Activated CD8-positive, alpha-beta T cell treated with anti-CD3 and anti-CD28 coated beads, Interleukin-2, amount 10 ng/mL, durations not matched to agents 7 days and 5 days (primary cell): ENCODE measurements at regions of chr12 and their contacts with region 1.

Region 1: DNA sequence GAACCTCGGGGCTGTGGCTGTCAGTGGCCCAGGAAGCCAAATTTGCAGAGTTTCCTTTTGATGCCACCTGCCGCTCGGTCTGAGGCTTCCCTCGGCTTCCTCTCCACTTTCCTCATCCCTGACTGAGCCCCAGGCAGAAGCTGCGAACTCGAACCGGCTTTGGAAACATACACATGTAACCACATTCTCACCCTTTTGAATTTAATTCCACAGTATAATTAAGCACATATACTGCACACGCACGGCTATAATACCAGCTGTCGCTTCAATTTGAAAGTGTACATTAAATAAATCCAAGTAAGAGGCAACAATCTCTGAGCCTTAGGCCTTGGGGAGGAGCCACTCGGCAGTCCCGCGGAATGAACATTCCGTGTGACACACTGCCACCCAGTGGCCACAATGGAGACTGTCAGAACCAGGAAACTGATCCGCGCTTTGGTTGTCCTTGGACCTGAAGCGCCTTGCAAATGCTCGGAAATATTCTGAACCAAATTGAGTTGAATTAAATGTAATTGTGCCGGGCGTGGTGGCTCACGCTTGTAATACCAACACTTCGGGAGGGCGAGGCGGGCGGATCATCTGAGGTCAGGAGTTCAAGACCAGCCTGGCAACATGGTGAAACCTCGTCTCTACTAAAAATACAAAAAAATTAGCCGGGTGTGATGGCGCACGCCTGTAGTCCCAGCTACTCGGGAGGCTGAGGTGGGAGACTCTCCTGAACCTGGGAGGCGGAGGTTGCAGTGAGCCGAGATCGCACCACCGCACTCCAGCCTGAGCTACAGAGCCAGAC is 117.9 kb upstream of the TMPO start:
- DNase-seq: peak; percentile 89
- ATAC-seq: peak; percentile 87
- H3K4me3 Mint-ChIP-seq: peak overlapping the region; percentile 75
- H3K27ac Mint-ChIP-seq: peak overlapping the region; percentile 84
- H3K4me1 Mint-ChIP-seq: peaks cover 39% of the 10 kb centered on the region
- H3K27me3 Mint-ChIP-seq: no peaks in the 10 kb centered on the region

Region 2: DNA sequence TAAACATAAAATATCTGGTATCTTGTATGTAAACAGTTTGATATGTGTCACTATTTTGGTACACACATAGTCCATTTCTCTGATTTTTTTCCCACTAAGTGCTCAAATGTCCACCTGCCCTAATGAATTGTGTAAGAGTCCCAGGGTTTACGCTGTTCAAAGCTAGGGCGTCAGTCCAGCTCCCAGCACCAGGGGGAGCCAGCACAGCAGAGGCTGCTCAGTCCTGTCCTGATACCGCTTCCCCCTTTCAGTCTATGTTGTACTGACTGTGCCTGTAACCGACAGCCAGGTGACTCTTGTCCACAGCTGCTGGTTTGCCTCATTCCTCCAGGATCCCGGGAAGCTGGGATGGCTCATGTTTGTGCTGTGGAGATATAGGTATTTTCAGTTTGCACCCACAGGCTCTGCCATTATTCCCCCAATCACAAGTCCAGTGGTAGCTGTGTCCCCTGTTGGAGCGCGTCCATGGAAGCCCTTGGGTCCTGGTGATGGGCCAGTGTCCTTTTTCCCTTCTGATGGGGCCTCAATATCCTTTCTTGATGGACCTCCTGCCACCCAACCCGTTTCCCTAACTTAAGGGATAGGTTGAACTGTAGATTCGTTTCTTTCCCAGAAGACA is 1248.5 kb before region 1 on chr12:
- CTCF ChIA-PET with region 1: interaction called, 10 read pairs
- POLR2A ChIA-PET with region 1: no interaction called
- DNase-seq: peak; percentile 63
- ATAC-seq: peak; percentile 96
- H3K4me3 Mint-ChIP-seq: no peak overlapping the region
- H3K27ac Mint-ChIP-seq: no peak overlapping the region
- H3K4me1 Mint-ChIP-seq: peaks cover 4% of the 10 kb centered on the region
- H3K27me3 Mint-ChIP-seq: peaks cover 3% of the 10 kb centered on the region

Region 3: GRCh38 chr12:98235301-98235700 is 162.2 kb before region 1 on chr12:
- CTCF ChIA-PET with region 1: no interaction called
- POLR2A ChIA-PET with region 1: no interaction called
- DNase-seq: no peak
- ATAC-seq: no peak
- H3K4me3 Mint-ChIP-seq: no peak overlapping the region
- H3K27ac Mint-ChIP-seq: no peak overlapping the region
- H3K4me1 Mint-ChIP-seq: no peaks in the 10 kb centered on the region
- H3K27me3 Mint-ChIP-seq: peaks cover 3% of the 10 kb centered on the region

Region 4: DNA sequence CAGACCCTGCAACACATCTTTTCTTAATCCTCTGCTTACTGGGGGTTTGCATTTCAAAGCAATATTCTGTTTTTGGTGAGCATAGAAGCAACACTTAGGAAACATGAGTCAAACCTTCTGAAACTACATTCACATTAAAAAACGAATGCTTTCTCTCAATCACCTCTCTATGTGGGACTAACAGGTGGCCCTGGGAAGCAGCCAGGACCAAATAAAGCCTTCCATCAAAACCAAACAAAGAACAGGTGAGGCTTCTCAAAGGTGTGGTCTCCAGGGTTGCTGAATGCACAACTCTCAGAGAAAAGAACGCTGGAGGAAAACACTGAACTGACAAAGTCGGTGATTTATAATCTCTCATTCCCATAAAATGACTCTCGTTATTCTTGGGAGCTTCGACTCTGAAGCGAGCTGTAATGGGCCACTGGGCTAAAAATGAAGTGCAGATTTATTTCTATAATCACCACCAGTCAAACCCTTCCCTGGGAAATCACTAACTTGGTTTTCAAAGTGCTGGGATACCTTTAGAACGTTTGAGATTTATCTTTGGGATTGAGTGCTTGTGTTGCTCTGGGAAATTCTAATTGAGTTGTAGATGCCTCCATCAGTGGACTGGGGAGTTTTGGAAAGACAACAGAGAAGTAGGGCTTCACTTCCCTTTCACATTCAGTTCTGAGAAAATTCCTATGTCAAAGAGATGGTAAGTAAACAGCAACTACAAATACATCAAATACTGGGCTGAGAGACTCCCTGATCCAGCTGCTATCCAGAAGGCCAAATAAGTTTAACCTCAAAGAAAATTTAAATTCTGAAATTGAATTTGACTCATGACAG is 144.1 kb before region 1 on chr12:
- CTCF ChIA-PET with region 1: no interaction called
- POLR2A ChIA-PET with region 1: no interaction called
- DNase-seq: no peak
- ATAC-seq: no peak
- H3K4me3 Mint-ChIP-seq: no peak overlapping the region
- H3K27ac Mint-ChIP-seq: no peak overlapping the region
- H3K4me1 Mint-ChIP-seq: no peaks in the 10 kb centered on the region
- H3K27me3 Mint-ChIP-seq: no peaks in the 10 kb centered on the region

Region 5: DNA sequence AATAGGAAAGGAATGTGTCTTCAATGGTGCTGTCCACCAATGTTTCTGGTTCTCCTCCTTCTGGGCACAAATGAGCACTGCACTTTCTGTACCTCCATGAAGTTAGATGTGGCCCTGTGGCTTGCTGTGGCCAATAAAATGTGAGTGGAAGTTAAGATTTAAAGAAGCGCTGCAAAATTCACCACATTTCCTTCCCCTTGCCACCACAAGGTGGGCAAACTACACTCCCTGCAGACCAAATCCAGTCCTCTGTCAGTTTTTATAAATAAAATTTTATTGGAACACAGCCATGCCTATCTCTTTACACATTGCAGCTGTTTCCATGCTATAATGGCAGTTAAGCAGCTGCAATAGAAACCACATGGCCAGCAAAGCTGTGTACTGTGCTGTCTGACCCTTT is 23.5 kb before region 1 on chr12:
- CTCF ChIA-PET with region 1: interaction called, 14 read pairs
- POLR2A ChIA-PET with region 1: no interaction called
- DNase-seq: peak; percentile 32
- ATAC-seq: peak; percentile 46
- H3K4me3 Mint-ChIP-seq: no peak overlapping the region
- H3K27ac Mint-ChIP-seq: no peak overlapping the region
- H3K4me1 Mint-ChIP-seq: peaks cover 33% of the 10 kb centered on the region
- H3K27me3 Mint-ChIP-seq: peaks cover 46% of the 10 kb centered on the region

Region 6: DNA sequence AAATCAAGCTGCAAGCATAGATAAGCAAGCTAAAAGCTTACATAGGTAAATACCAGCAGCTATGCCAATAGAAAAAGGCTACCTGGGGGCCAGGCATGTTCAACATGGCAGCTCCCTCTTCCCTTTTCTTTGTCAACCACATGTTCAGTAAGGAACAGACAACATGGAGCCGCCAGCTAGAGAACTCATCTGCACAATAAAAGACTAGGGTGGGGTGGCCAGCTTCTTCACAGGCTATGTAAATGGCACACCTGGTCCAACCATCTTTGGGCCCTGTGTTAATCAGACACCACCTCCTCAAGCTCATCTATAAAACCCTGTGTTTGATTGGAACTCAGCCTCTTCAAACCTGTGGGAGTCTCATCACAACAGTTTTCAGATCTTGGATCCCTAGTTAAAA is 11.9 kb before region 1 on chr12:
- CTCF ChIA-PET with region 1: interaction called, 13 read pairs
- POLR2A ChIA-PET with region 1: no interaction called
- DNase-seq: no peak
- ATAC-seq: no peak
- H3K4me3 Mint-ChIP-seq: no peak overlapping the region
- H3K27ac Mint-ChIP-seq: no peak overlapping the region
- H3K4me1 Mint-ChIP-seq: no peaks in the 10 kb centered on the region
- H3K27me3 Mint-ChIP-seq: peaks cover 26% of the 10 kb centered on the region